HepG2 (cell line): ENCODE measurements at regions of chr11 and their contacts with region 1.

Region 1: DNA sequence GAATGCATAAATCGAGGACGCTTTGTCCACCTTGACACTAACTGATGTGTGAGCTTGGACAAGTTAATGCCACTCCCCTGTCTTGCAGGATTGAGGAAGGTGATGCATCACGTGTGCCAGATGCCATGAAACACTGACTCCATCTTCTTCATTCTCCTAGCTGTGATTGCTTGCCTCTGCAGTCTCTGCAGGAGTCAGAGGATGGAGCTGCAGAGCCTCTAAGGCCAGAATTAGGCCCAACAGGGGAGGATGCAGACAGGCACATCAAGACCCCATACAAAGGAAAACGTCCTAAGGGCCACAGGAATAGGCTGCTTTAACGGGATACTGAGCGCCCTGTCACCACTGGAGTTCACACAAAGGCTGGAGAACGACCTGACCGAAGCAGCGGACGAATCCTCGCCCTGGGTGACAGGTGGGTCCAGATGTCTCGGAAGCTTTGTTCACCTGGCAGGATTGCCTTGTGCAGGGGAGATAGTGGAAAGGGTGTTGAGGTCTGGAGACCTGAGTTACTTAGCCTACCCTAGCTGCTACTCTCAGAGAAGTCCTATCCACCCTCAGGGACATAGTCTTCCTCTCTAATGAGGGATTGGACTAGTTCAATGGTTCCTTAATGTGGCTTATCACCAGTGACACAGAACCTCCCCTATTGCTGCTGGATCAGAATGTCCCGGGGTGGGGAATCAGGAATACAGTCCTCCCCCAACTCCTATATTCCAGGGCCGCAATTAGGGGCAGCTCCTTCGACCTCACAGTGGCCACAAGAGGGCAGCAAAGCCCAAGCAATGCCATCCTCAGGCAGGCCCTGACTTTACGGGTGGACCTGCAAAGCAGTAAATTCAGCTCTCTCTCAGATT is 32.4 kb downstream of the DBX1 start:
- DNase-seq: peak; percentile 52
- ATAC-seq: peak; percentile 90
- H3K4me3 ChIP-seq: no peak overlapping the region
- H3K27ac ChIP-seq: no peak overlapping the region
- H3K4me1 ChIP-seq: peaks cover 16% of the 10 kb centered on the region; the same call in 1 of the 2 replicates
- H3K27me3 ChIP-seq: peaks cover 0 to 19% of the 10 kb centered on the region in 2 experiments; a peak in 2 of 5 replicates
- CTCF ChIP-seq: peak; percentile 92
- EP300 ChIP-seq: no peak
- POLR2A ChIP-seq: no peak
- RAD21 ChIP-seq: peak; percentile 66

Region 2: GRCh38 chr11:19938169-19938856 is 189.6 kb before region 1 on chr11:
- CTCF ChIA-PET with region 1: interaction called, 12 read pairs
- POLR2A ChIA-PET with region 1: no interaction called
- in situ Hi-C with region 1: no loop called
- intact Hi-C with region 1: loop called (anchors 1 kb)
- DNase-seq: peak; percentile 40
- ATAC-seq: peak; percentile 88
- H3K4me3 ChIP-seq: no peak overlapping the region
- H3K27ac ChIP-seq: no peak overlapping the region
- H3K4me1 ChIP-seq: peaks cover 32% of the 10 kb centered on the region
- H3K27me3 ChIP-seq: no peaks in the 10 kb centered on the region
- CTCF ChIP-seq: peak; percentile 66
- EP300 ChIP-seq: no peak
- POLR2A ChIP-seq: no peak
- RAD21 ChIP-seq: 0 out of 2 replicates have a peak, but pooled peaks have one; percentile 39

Region 3: GRCh38 chr11:20097319-20098221 is 30.3 kb before region 1 on chr11:
- CTCF ChIA-PET with region 1: no interaction called
- POLR2A ChIA-PET with region 1: no interaction called
- in situ Hi-C with region 1: no loop called
- intact Hi-C with region 1: no loop called
- DNase-seq: no peak
- ATAC-seq: no peak
- H3K4me3 ChIP-seq: no peak overlapping the region
- H3K27ac ChIP-seq: no peak overlapping the region
- H3K4me1 ChIP-seq: no peaks in the 10 kb centered on the region
- H3K27me3 ChIP-seq: no peaks in the 10 kb centered on the region
- CTCF ChIP-seq: no peak
- EP300 ChIP-seq: no peak
- POLR2A ChIP-seq: no peak
- RAD21 ChIP-seq: no peak

Region 4: DNA sequence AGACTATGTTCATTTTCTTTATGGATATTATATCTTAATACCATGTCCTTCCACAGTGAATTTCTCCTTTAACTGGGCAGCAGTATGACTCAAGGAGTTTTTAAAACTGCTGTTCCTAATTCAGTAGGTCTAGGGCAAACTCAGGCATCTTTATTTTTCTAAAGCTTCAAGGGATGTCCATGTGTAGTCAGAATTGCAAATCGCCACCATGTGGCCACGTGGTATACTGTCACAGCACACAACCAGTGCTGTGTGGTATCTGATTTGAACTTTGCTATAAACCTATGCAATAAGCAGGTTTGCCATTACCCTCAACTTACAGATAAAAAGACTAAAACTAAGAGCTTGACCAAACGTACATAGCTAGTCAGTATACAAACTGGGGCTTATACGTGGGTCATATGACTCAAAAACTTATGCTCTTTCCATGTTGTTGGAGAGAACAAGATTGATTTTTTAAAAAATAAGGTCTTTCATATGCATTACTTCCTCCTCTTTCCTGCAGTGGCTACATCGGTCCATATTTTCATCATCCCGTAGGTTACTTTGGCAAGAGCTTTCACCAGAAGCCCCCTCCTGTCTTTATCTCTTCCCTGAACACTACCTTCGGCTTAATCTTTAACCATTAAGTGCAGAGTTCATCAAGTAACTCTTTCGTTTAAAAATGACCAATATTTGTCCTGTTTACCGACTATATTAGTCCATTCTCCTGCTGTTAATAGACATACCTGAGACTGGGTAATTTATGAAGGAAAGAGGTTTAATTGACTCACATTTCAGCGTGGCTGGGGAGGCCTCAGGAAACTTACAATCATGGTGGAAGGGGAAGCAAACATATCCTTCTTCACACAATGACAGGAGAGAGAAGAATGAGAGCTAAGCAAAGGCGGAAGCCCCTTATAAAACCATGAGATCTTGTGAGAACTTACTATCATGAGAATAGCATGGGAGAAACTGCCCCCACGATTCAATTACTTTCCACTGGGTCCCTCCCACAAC is 227.6 kb after region 1 on chr11:
- CTCF ChIA-PET with region 1: interaction called, 17 read pairs
- POLR2A ChIA-PET with region 1: no interaction called
- in situ Hi-C with region 1: loop called (anchors 5 kb)
- intact Hi-C with region 1: loop called (anchors 1 kb)
- DNase-seq: peak; percentile 78
- ATAC-seq: peak; percentile 93
- H3K4me3 ChIP-seq: peak overlapping the region in 2 of 3 experiments; percentile 34 to 46; a peak in 2 of 6 replicates
- H3K27ac ChIP-seq: peak overlapping the region; percentile 25
- H3K4me1 ChIP-seq: peaks cover 49% of the 10 kb centered on the region
- H3K27me3 ChIP-seq: no peaks in the 10 kb centered on the region
- CTCF ChIP-seq: peak; percentile 63
- EP300 ChIP-seq: no peak
- POLR2A ChIP-seq: no peak
- RAD21 ChIP-seq: no peak

Region 5: GRCh38 chr11:20609727-20610707 is 482.1 kb after region 1 on chr11:
- CTCF ChIA-PET with region 1: interaction called, 4 read pairs
- POLR2A ChIA-PET with region 1: no interaction called
- in situ Hi-C with region 1: loop called (anchors 25 kb)
- intact Hi-C with region 1: loop called (anchors 2 kb)
- DNase-seq: peak; percentile 55
- ATAC-seq: peak; percentile 98
- H3K4me3 ChIP-seq: no peak overlapping the region
- H3K27ac ChIP-seq: no peak overlapping the region
- H3K4me1 ChIP-seq: peaks cover 12% of the 10 kb centered on the region; the same call in 1 of the 2 replicates
- H3K27me3 ChIP-seq: peaks cover 0 to 25% of the 10 kb centered on the region in 2 experiments; a peak in 2 of 5 replicates
- CTCF ChIP-seq: peak; percentile 98
- EP300 ChIP-seq: 0 out of 4 replicates have a peak, but pooled peaks of 1 of the 2 experiments have one; percentile 25
- POLR2A ChIP-seq: no peak
- RAD21 ChIP-seq: peak; percentile 92